Posterior vena cava (tissue), 2 donors: ENCODE measurements at regions of chr1 and their contacts with region 1.

Region 1: DNA sequence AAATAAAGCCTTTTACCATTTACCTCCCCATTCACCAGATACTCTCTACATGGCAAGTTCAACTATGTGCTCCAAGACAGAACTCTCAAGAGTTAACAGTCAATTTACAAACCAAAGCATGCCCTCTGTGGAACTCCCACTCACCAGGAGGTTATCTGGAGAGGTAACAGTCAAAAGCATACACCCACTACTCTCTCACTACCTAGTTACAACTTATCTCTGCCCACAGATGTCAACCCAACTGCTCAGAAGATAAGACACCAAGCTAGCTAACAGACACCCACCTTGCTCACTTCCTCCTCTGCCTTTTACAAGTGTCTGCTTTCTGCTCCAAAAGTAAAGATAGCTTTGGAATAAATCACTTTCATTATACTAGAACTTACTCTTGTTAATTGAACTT is 131.0 kb downstream of the TRIM33 start:
- DNase-seq: no peak

Region 2: DNA sequence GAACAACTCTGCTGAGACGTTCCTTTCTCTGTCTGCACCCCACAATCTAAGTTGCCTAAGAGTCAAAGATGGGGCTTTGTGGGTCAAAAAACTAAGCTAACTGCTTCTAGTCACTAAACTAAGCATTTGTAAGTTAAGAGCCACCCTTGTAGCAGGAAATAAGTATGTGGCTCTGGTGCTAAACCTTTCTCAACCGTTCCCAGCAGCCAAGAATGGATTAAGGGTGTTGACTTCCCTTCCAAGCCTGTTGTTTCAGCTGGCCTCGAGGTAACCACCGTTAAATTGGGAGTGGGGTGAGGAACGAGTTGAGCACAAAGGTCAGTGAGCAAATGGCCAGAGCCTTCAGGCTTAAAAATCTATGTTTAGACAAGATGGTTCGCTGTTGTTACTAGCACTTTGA is 38.1 kb before region 1 on chr1:
- intact Hi-C with region 1: loop called in 1 of 2 experiments (anchors 2 kb)
- DNase-seq: no peak

Region 3: DNA sequence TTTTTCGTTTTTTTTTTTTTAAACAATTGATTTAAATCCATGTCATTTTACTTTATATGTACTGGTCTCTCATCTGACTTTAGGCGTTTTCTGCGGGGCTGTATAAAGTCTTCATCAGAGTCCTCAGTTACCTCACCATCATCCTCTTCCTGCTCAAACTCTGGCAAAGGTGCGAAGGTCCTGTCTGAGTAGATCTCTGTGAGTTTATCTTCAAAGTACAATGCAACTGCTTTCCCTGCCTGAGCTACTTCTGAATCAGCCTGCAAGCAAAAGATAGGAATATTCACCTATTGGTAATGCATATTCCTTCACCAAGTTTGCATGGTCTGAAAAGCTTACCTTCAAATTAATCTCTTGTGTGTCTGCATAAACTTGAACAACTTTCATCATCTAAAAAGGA is 17.6 kb after region 1 on chr1:
- intact Hi-C with region 1: no loop called
- DNase-seq: no peak